AG04450 (cell line): ENCODE measurements at regions of chr12 and their contacts with region 1.

Region 1: GRCh38 chr12:118372541-118373495 is at the start of gene TAOK3:
- DNase-seq: peak; percentile 96
- H3K4me3 ChIP-seq: peak within 1 kb of the TSS; percentile 92
- H3K27ac ChIP-seq: peak within 1 kb of the TSS; percentile 57
- H3K27me3 ChIP-seq: no peaks in the 10 kb centered on the region
- CTCF ChIP-seq: no peak
- polyA plus RNA-seq, gene TAOK3: 48.8 and 56.4 TPM in 2 replicates

Region 2: GRCh38 chr12:117774941-117775775 is 597.7 kb before region 1 on chr12:
- CTCF ChIA-PET with region 1: no interaction called
- POLR2A ChIA-PET with region 1: no interaction called
- DNase-seq: no peak
- H3K4me3 ChIP-seq: no peak overlapping the region
- H3K27ac ChIP-seq: no peak overlapping the region
- H3K27me3 ChIP-seq: no peaks in the 10 kb centered on the region
- CTCF ChIP-seq: no peak

Region 3: DNA sequence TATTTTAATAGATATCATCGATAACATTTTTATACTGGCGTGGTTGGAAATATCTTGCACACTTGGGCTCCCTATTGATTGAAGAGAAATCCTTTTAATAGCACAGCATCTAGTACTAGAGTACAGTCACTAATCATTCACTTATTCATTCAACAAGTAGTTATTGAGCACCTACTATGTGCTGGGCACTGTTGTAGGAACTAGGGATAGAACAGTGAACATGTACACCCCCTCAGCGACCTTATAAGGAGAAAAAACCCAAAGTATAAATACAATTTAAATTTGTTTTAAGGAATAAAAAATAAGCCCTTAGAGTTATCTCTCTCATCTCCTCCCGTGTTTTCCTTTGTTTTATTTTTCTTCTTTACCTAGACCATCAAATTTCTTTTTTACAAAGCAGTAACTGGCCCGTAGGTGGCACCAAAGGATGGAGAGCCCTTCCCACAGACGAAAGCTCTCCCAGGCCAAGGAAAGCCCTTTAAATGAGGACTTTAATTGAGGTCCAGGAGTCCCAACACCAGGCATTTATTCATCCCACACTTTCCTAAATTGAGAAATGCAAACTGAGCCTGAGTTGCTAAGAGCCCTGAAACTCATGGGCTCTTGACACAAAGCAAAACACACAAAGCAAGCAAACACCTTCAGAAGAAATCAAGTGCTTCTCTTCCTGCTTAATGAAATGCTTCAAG is 207.9 kb before region 1 on chr12:
- CTCF ChIA-PET with region 1: interaction called, 107 read pairs
- POLR2A ChIA-PET with region 1: no interaction called
- DNase-seq: no peak
- H3K4me3 ChIP-seq: no peak overlapping the region
- H3K27ac ChIP-seq: no peak overlapping the region
- H3K27me3 ChIP-seq: no peaks in the 10 kb centered on the region
- CTCF ChIP-seq: peak; percentile 66

Region 4: GRCh38 chr12:118189741-118190191 is 183.1 kb before region 1 on chr12:
- CTCF ChIA-PET with region 1: interaction called, 333 read pairs
- POLR2A ChIA-PET with region 1: interaction called, 10 read pairs
- DNase-seq: peak; percentile 66
- H3K4me3 ChIP-seq: peak overlapping the region; percentile 66
- H3K27ac ChIP-seq: peak overlapping the region; percentile 96
- H3K27me3 ChIP-seq: no peaks in the 10 kb centered on the region
- CTCF ChIP-seq: no peak

Region 5: DNA sequence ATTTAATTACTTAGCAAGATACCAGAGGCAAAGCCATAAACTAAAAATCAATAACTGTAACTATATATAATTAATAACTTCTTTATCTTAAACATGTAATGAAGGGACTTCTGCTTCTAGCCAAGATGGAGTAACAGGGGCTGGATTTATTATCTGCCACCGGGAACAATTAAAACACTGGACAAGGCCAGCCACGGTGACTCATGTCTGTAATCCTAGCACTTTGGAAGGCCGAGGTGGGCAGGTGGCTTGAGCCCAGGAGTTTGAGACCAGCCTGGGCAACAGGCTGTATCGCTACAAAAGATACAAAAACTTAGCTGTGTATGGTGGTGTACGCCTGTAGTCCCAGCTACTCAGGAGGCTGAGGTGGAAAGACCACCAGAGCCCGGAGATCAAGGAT is 113.7 kb before region 1 on chr12:
- CTCF ChIA-PET with region 1: interaction called, 24 read pairs
- POLR2A ChIA-PET with region 1: no interaction called
- DNase-seq: no peak
- H3K4me3 ChIP-seq: no peak overlapping the region
- H3K27ac ChIP-seq: no peak overlapping the region
- H3K27me3 ChIP-seq: no peaks in the 10 kb centered on the region
- CTCF ChIP-seq: no peak

Region 6: DNA sequence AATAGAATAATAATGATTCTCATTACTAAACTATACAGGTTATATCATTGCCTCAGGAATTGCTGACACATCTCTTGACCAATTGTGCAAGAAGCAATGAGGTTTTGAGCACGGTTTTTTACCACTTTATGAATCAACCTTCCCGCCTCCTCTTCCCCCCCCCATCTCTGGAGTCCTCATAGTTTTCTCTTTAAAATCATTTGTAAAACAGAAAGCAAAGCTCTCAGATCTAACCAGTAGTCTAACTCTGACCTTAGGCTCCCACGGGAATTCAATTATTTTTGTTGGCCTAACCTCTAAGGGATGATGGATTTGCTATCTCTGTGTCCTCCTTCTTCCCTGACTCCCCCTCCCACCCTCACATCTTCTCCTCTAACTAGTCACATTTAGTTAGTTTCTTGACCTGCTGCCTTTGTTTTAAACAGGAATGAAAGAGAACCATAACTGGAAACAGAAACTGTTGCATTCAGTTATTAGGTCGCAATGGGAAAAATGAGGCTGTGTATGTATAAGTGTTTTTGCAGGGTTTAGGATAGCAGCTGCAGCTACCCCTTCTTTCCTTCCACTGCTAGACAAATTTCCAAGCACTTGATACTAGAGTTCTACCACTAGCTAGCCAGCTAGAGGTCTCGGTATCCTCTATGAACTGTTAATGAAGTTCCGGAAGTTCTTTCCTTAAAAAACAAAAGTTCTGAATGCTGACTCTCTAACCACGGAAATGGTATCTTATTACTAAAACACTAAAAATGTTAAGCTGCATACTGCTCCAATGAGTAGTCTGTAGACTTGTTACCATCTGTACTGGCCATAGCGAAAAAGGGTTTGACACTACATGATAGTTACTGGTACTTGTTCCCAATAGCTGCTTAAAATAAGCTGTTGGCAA is 65.5 kb before region 1 on chr12:
- CTCF ChIA-PET with region 1: interaction called, 14 read pairs
- POLR2A ChIA-PET with region 1: interaction called, 9 read pairs
- DNase-seq: peak; percentile 80
- H3K4me3 ChIP-seq: peak overlapping the region; percentile 53
- H3K27ac ChIP-seq: peak overlapping the region; percentile 99
- H3K27me3 ChIP-seq: no peaks in the 10 kb centered on the region
- CTCF ChIP-seq: no peak

Region 7: GRCh38 chr12:118332511-118332910 is 40.3 kb before region 1 on chr12:
- CTCF ChIA-PET with region 1: interaction called, 13 read pairs
- POLR2A ChIA-PET with region 1: interaction called, 5 read pairs
- DNase-seq: no peak
- H3K4me3 ChIP-seq: no peak overlapping the region
- H3K27ac ChIP-seq: no peak overlapping the region
- H3K27me3 ChIP-seq: no peaks in the 10 kb centered on the region
- CTCF ChIP-seq: no peak

Region 8: DNA sequence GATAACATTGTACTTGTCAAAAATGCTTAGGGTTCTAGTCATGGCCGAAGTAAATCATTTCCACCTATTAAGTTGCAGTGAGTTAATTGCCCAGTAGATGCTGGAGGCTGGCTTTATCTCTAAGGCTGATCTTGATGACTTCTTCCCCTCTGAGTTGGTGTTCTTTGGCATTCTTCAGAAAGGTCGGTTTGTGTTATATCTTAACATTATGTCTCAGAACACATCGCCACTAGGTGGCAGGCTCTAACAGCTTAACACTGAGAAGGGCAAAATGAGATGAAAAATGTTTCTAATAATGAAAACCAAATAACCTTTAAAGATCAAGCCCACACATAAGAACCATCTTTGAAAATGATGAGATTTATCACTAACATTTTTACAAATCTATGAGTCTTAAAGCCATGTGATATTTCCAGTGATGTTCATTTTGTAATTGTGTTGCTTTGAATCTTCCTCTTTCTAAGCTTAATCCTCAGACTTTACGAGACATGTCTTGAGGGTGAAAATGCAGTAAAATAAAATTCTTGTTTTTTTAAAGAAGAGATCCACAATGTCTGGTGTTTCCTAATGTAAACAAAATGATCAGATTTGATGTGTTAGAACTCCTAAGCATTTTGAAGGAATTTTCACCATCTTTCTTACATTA is 32.2 kb after region 1 on chr12:
- CTCF ChIA-PET with region 1: interaction called, 41 read pairs
- POLR2A ChIA-PET with region 1: no interaction called
- DNase-seq: peak; percentile 27
- H3K4me3 ChIP-seq: no peak overlapping the region
- H3K27ac ChIP-seq: no peak overlapping the region
- H3K27me3 ChIP-seq: no peaks in the 10 kb centered on the region
- CTCF ChIP-seq: peak; percentile 78

Region 9: DNA sequence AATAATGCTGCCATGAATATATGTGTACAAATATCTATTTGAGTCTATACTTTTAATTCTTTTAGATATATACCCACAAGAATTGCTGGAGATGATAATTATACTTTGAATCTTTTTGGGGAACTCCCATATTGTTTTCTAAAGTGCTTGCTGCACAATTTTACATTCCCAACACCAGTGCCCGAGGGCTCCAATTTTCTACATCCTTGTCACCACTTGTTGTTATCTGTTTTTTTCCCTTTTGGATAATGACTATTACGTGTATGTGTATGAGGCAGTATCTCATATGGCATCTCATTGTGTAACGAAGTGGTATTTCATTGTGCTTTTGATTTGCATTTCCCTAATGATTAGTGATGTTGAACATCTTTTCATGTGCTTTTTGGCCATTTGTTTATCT is 130.7 kb after region 1 on chr12:
- CTCF ChIA-PET with region 1: no interaction called
- POLR2A ChIA-PET with region 1: no interaction called
- DNase-seq: no peak
- H3K4me3 ChIP-seq: no peak overlapping the region
- H3K27ac ChIP-seq: no peak overlapping the region
- H3K27me3 ChIP-seq: no peaks in the 10 kb centered on the region
- CTCF ChIP-seq: no peak